ENCODE measurements at regions of chr10 and their contacts with region 1.

Region 1: DNA sequence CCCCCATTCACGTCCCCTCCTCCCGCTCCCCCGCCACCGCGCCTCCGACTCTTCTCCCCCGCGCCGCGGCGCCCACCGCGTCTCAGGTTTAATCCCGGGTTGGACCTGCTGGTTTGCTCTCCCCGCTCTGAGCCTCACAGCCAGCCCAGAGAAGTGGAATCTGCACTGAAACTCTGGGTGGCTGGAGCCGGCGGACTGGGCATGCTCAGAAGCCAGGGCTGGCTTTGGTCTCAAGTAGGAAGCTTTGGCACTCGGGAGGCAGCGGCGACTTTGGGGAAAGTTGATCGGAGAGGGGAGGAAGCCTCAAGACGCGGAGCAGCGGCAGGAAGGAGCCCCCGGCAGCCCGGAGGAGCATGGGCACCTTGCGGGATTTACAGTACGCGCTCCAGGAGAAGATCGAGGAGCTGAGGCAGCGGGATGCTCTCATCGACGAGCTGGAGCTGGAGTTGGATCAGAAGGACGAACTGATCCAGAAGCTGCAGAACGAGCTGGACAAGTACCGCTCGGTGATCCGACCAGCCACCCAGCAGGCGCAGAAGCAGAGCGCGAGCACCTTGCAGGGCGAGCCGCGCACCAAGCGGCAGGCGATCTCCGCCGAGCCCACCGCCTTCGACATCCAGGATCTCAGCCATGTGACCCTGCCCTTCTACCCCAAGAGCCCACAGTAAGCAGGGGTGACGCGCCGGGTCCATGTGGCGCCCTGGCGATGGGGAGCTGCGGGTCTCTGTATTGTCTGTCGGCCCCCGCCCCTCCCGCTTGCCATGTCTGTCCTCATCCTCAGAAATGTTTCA is at the start of gene PRKG1:
- DNase-seq: peak; percentile 79
- H3K4me3 ChIP-seq: peak within 1 kb of the TSS; percentile 54
- H3K27ac ChIP-seq: peak within 1 kb of the TSS; percentile 62
- H3K4me1 ChIP-seq: no peaks in the 10 kb centered on the region
- H3K27me3 ChIP-seq: no peaks in the 10 kb centered on the region
- CTCF ChIP-seq: no peak
- total RNA-seq, gene PRKG1: 8.1 to 16.6 TPM

Region 2: GRCh38 chr10:50679149-50679548 is 395.3 kb before region 1 on chr10:
- intact Hi-C with region 1: no loop called
- DNase-seq: no peak
- H3K4me3 ChIP-seq: no peak overlapping the region
- H3K27ac ChIP-seq: no peak overlapping the region
- H3K4me1 ChIP-seq: no peaks in the 10 kb centered on the region
- H3K27me3 ChIP-seq: no peaks in the 10 kb centered on the region
- CTCF ChIP-seq: no peak

Region 3: GRCh38 chr10:51422311-51423120 is 348.1 kb after region 1 on chr10:
- intact Hi-C with region 1: loop called (anchors 5 kb)
- DNase-seq: peak; percentile 69
- H3K4me3 ChIP-seq: no peak overlapping the region
- H3K27ac ChIP-seq: peak overlapping the region; percentile 38
- H3K4me1 ChIP-seq: peaks cover 6% of the 10 kb centered on the region
- H3K27me3 ChIP-seq: no peaks in the 10 kb centered on the region
- CTCF ChIP-seq: peak; percentile 65